Posterior cingulate gyrus (tissue), 11 donors: ENCODE measurements at regions of chr6 and their contacts with region 1.

Region 1: DNA sequence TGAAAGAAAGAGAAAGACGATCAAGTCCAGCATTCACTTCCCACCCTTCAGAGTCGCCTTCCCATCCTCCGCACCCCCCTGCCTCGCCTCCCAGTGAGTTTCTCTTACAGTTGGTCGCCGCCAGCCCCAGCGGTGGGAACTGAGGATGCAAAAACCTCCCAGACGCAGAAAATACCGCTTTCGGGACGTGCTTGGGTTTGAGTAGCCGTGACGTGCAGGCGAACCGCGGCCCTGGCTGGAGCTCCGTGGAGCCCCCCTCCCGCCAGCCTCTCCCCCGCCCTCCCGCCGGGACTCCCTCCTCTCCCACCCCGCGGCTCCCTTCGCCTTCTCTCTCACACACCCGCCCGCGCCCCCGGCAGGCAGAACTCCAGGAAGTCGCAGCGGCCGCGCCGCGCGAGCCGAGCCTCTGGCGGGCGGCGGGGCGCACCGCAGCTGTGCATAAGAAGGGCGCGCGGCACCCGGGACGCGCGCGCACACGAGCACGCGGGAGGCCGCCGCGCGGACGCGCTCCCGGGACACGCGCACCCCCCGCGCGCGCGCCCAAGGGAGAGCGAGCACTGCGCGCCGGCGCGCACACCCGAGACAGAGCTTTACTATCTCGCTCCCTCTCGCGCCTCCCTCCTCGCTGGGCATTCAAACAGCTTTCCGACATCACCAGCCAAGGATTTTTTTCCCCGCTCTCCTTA is at the start of gene ADGRB3:
- DNase-seq: peak; percentile 83 to 99 (median 92)

Region 2: DNA sequence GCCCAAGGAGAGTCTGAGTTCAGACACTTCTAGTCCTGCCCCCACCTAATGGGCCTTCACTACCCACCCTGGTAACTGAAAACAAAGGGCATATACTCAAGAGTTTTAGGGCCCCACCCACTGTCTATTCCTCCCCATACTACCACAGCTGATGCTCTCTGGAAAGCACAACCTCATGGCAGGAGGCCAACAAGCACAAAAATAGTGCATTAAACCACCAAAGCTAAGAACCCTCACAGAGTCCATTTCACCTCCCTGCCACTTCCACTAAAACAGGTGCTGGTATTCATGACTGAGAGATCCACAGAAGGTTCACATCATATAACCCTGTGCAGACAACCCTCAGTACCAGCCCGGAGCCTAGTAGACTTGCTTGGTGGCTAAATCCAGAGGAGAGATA is 131.9 kb before region 1 on chr6:
- intact Hi-C with region 1: no loop called
- DNase-seq: no peak

Region 3: DNA sequence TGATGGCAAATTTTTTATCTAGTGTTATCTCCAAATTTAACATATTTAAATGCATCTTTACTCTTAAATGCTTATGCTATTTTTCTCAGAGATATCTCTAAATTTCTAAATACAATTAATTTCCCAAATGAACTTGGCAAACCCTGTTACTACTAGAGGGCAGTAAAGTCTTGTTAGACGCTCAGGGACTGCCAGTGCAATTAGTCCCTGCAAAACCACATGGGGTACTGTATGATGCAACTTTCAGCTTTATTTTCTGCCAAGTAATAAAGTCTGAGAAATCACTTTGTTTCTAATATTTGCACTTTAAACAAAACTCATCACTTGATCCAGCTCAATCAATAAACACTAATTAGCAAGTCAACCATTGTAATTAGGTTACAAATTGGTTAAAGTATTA is 75.8 kb before region 1 on chr6:
- intact Hi-C with region 1: loop called (anchors 1 kb)
- DNase-seq: no peak

Region 4: DNA sequence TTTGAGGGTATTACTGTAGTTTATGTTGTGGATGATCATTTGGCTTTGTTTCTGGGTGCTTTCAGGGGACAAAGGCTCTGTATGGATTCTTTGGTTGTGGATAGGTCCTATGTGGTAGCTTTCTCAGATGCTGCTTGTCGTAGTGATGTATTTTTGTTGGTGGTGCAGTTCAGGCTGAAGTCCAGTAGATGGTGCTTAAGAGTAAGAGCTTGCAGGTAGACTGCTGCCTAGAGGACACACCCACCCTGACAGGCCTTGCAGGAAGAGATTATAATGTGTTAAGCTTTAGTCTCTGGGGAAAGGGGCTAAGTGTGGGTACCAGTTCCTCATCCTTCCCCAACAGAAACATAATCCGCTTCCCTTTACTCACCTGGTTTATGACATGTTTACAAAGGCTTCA is 62.3 kb before region 1 on chr6:
- intact Hi-C with region 1: loop called (anchors 5 kb)
- DNase-seq: peak in 1 of 10 donors; percentile 23

Region 5: GRCh38 chr6:68876792-68877493 is 242.1 kb after region 1 on chr6:
- intact Hi-C with region 1: no loop called
- DNase-seq: no peak